Mammary epithelial cell (primary cell): ENCODE measurements at regions of chr1 and their contacts with region 1.

Region 1: GRCh38 chr1:206725109-206725963 is 40.6 kb downstream of the MAPKAPK2 start:
- DNase-seq: no peak
- H3K4me3 ChIP-seq: no peak overlapping the region
- H3K27ac ChIP-seq: no peak overlapping the region
- H3K4me1 ChIP-seq: peaks cover 19% of the 10 kb centered on the region
- H3K27me3 ChIP-seq: no peaks in the 10 kb centered on the region
- CTCF ChIP-seq: peak; percentile 62 to 68

Region 2: DNA sequence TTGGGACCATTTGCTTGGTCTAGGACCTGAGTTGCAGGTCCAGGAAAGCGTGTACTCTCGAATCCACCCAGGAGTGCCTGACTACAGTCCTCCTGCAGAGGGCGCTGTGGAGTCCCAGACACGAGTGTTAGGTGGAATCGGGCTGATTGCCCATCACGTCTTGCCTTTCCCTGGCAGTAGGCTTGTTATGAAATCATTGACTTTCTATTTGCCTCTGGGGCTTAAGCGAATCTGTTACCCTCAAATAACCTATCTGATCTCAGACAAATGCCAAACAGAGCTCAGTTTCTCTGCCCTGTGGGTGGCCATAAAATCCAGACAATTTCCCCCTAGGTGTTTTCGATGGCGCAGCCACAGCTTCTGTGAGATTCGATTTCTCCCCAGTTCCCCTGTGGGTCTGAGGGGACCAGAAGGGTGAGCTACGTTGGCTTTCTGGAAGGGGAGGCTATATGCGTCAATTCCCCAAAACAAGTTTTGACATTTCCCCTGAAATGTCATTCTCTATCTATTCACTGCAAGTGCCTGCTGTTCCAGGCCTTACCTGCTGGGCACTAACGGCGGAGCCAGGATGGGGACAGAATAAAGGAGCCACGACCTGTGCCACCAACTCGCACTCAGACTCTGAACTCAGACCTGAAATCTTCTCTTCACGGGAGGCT is 139.8 kb after region 1 on chr1 and contains the start of gene IL20:
- CTCF ChIA-PET with region 1: no interaction called
- dilution Hi-C with region 1: no loop called
- in situ Hi-C with region 1: no loop called
- intact Hi-C with region 1: loop called (anchors 5 kb)
- DNase-seq: peak; percentile 78
- H3K4me3 ChIP-seq: no peak within 1 kb of the TSS
- H3K27ac ChIP-seq: no peak within 1 kb of the TSS
- H3K4me1 ChIP-seq: peaks cover 34% of the 10 kb centered on the region
- H3K27me3 ChIP-seq: no peaks in the 10 kb centered on the region
- CTCF ChIP-seq: peak; percentile 98 to 99
- total RNA-seq, gene IL20: not detected

Region 3: GRCh38 chr1:207831517-207832327 is 1106.4 kb after region 1 on chr1:
- CTCF ChIA-PET with region 1: no interaction called
- dilution Hi-C with region 1: no loop called
- in situ Hi-C with region 1: no loop called
- intact Hi-C with region 1: no loop called
- DNase-seq: peak; percentile 69
- H3K4me3 ChIP-seq: no peak overlapping the region
- H3K27ac ChIP-seq: no peak overlapping the region
- H3K4me1 ChIP-seq: no peaks in the 10 kb centered on the region
- H3K27me3 ChIP-seq: no peaks in the 10 kb centered on the region
- CTCF ChIP-seq: no peak